Activated CD8-positive, alpha-beta T cell treated with anti-CD3 and anti-CD28 coated beads, Interleukin-2, amount 10 ng/mL, durations not matched to agents 7 days and 5 days (primary cell): ENCODE measurements at regions of chr9 and their contacts with region 1.

Region 1: DNA sequence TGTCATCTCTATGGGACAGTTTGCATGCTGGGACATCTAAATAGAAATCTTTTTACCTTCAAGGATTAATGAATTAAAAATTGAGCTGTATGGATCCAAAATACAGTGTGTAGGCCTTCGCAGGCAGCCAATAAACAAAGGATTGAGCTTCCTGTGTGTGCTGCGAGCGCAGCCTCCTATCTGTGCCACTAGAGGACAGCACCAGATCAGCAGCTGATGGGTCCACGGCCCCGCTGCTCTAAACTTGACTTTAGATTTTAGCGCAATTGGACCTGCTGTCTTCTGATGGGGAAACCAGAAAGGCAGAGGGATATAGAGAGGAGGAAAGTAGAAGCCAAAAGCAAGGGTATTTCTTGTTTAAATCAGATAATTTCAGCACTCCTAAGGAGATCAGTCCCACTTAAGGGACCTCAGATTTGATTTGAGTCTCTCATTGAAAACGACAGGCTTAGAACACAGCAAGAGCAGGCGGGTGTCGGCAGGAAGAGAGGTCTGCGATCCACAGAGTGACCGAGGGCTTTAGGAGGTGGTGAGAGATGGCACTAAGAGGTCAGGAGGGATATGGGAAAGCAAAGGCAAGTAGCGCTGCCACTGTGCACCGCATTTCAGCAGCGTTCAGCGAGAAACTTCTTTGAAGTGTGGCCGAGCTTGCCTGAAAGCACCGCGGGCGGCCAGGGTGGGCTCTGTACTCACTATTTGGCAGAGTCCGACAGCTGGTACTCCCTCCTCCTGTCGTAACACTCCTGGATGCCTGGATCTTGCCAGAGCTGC is 214.3 kb downstream of the GNA14 start:
- DNase-seq: peak; percentile 67
- ATAC-seq: peak; percentile 90
- H3K4me3 Mint-ChIP-seq: no peak overlapping the region
- H3K27ac Mint-ChIP-seq: no peak overlapping the region
- H3K4me1 Mint-ChIP-seq: peaks cover 2% of the 10 kb centered on the region
- H3K27me3 Mint-ChIP-seq: no peaks in the 10 kb centered on the region

Region 2: DNA sequence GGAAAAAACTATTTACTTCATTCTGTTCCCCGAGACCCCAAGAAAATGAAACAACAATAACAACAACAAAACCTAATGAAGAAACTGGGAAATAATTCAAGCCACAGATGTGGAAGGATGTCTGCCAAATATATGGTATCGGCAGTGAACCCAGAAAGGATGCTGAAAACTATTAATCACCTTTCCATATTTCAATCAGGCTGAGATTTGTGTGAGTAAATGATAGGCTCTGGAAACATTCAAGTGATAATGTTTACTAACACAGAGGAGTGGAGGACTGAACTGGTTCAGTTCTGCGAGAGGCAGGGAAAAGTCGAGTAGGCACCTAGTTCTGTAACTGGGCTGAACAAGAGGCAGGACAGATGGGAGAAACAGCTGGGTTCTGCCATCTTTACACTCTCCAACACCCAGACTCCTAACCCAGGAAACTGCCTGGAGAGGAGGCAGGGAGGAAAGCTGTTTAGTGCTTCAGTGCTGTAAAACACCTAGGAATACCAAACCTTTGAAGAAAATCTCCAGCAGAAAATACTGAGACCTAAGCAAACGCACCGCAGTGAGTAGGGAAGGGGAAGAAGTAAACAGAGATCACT is 311.1 kb after region 1 on chr9:
- CTCF ChIA-PET with region 1: interaction called, 21 read pairs
- POLR2A ChIA-PET with region 1: no interaction called
- DNase-seq: no peak
- ATAC-seq: no peak
- H3K4me3 Mint-ChIP-seq: no peak overlapping the region
- H3K27ac Mint-ChIP-seq: no peak overlapping the region
- H3K4me1 Mint-ChIP-seq: peaks cover 12% of the 10 kb centered on the region
- H3K27me3 Mint-ChIP-seq: no peaks in the 10 kb centered on the region

Region 3: GRCh38 chr9:77751341-77752091 is 317.7 kb after region 1 on chr9:
- CTCF ChIA-PET with region 1: interaction called, 21 read pairs
- POLR2A ChIA-PET with region 1: no interaction called
- DNase-seq: peak; percentile 29
- ATAC-seq: no peak
- H3K4me3 Mint-ChIP-seq: no peak overlapping the region
- H3K27ac Mint-ChIP-seq: no peak overlapping the region
- H3K4me1 Mint-ChIP-seq: peaks cover 7% of the 10 kb centered on the region
- H3K27me3 Mint-ChIP-seq: no peaks in the 10 kb centered on the region

Region 4: GRCh38 chr9:77764894-77765780 is 331.3 kb after region 1 on chr9:
- CTCF ChIA-PET with region 1: interaction called, 12 read pairs
- POLR2A ChIA-PET with region 1: no interaction called
- DNase-seq: no peak
- ATAC-seq: no peak
- H3K4me3 Mint-ChIP-seq: no peak overlapping the region
- H3K27ac Mint-ChIP-seq: no peak overlapping the region
- H3K4me1 Mint-ChIP-seq: no peaks in the 10 kb centered on the region
- H3K27me3 Mint-ChIP-seq: no peaks in the 10 kb centered on the region